A549 (cell line): ENCODE measurements at regions of chr6 and their contacts with region 1.

Region 1: DNA sequence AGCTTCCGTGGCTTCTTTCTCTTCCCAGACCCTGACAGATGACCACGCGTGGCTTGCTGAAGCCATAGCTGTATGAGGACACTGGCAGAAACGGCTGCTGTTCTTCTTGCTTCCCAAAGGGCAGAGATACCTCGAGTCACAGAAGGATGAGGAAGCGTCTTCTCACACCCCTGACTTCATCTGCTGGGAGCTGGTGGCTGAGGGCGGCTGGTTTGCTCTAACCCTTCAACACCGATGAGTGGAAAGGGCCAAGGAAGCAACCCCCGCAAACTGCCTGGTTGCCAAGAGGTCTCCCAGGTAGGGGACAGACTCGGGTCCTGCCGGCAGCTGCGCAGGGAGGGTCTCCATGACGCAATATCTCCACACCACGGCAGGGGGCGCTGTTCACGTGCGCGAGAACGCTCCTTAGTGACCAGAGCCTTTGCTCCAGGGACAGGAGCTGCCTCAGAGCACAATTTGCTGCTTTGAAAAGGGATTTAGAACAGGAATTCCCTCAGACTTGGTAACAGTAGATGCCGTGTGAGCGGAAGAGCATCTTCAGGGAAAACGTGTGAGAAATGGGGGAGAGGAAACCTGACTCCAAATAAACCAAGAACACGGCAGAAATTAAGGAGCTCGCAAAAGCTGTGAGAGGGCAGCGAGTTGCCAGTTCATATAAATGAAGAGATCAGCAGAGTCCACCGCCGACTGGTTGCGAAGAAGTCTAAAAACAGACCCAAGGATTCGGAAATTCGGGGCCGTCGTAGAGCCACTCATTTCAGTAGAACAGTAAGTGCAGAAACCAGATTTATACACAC is 80.2 kb downstream of the ERMARD start:
- DNase-seq: peak; percentile 46 to 51
- ATAC-seq: peak; percentile 81 to 97; a peak in 5 of 6 replicates
- H3K4me3 ChIP-seq: no peak overlapping the region
- H3K27ac ChIP-seq: no peak overlapping the region
- H3K4me1 ChIP-seq: peaks cover 12% of the 10 kb centered on the region; the same call in 2 of the 3 replicates
- CTCF ChIP-seq: peak; percentile 68
- EP300 ChIP-seq: no peak
- POLR2A ChIP-seq: no peak
- RAD21 ChIP-seq: peak; percentile 76 to 78

Region 2: GRCh38 chr6:169778646-169779045 is 53.0 kb before region 1 on chr6:
- CTCF ChIA-PET with region 1: no interaction called
- POLR2A ChIA-PET with region 1: no interaction called
- DNase-seq: no peak
- ATAC-seq: no peak
- H3K4me3 ChIP-seq: no peak overlapping the region
- H3K27ac ChIP-seq: no peak overlapping the region
- H3K4me1 ChIP-seq: no peaks in the 10 kb centered on the region
- CTCF ChIP-seq: no peak
- EP300 ChIP-seq: no peak
- POLR2A ChIP-seq: no peak
- RAD21 ChIP-seq: no peak

Region 3: DNA sequence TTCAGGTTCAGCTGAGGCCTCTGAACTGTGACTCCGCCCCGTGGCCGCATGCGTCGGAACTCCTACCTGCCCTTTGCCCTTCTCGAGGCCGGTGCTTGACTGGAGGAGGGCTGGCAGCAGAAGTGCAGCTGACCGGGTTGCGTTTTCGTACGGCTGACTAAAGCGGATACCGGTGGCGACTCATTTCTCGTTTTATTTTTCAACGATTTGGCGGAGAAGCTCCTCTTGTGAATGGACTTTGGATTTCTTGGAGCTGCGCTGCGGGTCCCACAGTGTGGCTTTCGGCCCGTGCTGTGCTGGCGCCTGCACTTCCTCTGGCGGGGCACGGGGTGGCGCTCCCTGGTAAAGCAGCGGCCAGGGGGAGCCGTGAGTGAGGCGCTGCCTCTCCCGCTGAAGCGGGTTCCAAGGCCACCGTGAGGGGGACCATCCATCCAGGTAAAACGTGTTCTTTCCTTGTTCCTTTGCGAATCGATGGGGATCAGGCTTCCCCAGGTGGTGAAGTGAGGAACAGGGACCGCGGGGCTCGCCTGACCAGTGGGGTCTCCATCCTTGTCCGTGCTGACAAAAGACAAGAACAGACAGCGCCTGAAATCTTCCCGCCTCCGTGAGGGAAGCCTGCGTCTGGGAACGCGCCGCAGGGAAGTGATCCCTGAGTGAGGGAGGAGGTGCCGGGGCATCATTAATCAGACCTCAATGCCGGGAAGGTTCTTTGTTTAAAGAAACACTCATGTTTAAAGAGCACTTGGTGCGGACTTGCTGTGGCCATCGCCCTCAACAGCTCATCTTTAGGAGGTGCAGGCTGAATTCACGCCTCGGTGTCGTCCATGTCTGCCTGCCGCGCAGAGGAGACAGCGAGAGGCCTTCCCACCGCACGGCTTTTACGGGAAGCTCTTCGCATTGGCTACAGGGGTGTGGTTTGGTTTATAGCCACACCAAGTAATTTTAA is 41.4 kb before region 1 on chr6:
- CTCF ChIA-PET with region 1: interaction called, 14 read pairs
- POLR2A ChIA-PET with region 1: no interaction called
- DNase-seq: peak; percentile 67 to 73
- ATAC-seq: peak; percentile 96 to 99
- H3K4me3 ChIP-seq: peak overlapping the region; percentile 50
- H3K27ac ChIP-seq: peak overlapping the region; percentile 71 to 84
- H3K4me1 ChIP-seq: 0 out of 3 replicates have a peak, but pooled peaks cover 5% of the 10 kb centered on the region
- CTCF ChIP-seq: peak; percentile 78
- EP300 ChIP-seq: no peak
- POLR2A ChIP-seq: 0 out of 2 replicates have a peak, but pooled peaks have one; percentile 10
- RAD21 ChIP-seq: peak; percentile 80 to 90

Region 4: GRCh38 chr6:169800668-169801395 is 30.8 kb before region 1 on chr6:
- CTCF ChIA-PET with region 1: interaction called, 17 read pairs
- POLR2A ChIA-PET with region 1: no interaction called
- DNase-seq: peak; percentile 52 to 72
- ATAC-seq: peak; percentile 94 to 95
- H3K4me3 ChIP-seq: no peak overlapping the region
- H3K27ac ChIP-seq: peak overlapping the region; percentile 80 to 89
- H3K4me1 ChIP-seq: peaks cover 32% of the 10 kb centered on the region
- CTCF ChIP-seq: no peak
- EP300 ChIP-seq: peak in 1 of 2 experiments; percentile 70; a peak in 1 of 5 replicates
- POLR2A ChIP-seq: no peak
- RAD21 ChIP-seq: no peak

Region 5: DNA sequence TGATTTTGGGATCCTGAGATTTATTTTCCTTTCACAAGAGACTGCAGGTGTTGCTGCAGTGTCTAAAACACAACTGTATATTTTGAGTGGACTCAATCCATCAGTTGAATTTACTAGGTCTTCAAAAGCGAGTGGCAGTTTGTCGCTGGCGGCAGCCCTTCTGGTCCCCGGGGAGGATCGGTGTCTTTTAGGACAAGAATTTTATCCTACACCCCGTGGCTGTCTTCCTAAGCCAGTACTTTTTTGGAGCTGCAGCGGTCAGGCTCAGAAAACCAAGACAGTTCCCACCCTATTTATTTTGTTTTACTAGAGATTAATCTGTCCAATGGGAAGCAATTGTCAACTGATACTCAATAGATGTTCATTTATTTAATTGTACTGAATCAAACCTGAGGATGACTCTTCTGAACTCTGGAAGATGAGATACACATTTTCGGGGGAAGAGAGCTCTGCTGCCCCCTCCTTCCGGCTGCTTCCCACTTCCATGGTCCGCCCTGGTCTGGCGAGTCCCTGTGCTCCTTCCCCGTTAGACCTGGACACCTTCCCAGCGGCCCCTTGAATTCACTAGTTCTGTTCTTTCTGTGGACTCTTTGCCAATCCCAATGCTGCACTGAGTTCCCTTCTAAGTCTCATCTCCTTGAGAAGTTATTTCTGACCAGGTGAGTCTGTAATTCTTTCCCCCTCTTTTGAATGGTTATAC is 10.4 kb after region 1 on chr6:
- CTCF ChIA-PET with region 1: interaction called, 30 read pairs
- POLR2A ChIA-PET with region 1: no interaction called
- DNase-seq: no peak
- ATAC-seq: no peak
- H3K4me3 ChIP-seq: no peak overlapping the region
- H3K27ac ChIP-seq: no peak overlapping the region
- H3K4me1 ChIP-seq: no peaks in the 10 kb centered on the region
- CTCF ChIP-seq: no peak
- EP300 ChIP-seq: no peak
- POLR2A ChIP-seq: no peak
- RAD21 ChIP-seq: no peak

Region 6: DNA sequence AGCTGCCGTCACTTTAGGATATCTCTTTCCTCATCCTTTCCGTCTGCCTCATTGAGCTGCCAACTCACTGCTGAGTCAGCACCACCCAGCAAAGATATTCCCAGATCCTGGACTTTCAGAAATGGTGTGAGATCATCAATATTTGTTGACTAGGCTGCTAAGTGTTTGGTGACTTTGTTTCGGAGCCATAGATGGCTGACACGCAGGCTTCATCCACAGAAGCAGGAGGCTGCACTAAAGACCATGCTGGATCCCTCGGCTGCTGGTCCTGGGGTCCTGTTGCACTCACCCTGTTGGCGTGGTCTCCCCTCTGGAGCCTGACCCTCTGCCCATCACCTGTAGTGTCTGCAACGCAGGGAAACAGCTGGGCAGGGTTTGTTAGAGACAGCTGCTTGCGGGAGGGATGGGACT is 16.3 kb after region 1 on chr6:
- CTCF ChIA-PET with region 1: interaction called, 30 read pairs
- POLR2A ChIA-PET with region 1: no interaction called
- DNase-seq: no peak
- ATAC-seq: no peak
- H3K4me3 ChIP-seq: no peak overlapping the region
- H3K27ac ChIP-seq: no peak overlapping the region
- H3K4me1 ChIP-seq: no peaks in the 10 kb centered on the region
- CTCF ChIP-seq: no peak
- EP300 ChIP-seq: no peak
- POLR2A ChIP-seq: no peak
- RAD21 ChIP-seq: no peak

Region 7: DNA sequence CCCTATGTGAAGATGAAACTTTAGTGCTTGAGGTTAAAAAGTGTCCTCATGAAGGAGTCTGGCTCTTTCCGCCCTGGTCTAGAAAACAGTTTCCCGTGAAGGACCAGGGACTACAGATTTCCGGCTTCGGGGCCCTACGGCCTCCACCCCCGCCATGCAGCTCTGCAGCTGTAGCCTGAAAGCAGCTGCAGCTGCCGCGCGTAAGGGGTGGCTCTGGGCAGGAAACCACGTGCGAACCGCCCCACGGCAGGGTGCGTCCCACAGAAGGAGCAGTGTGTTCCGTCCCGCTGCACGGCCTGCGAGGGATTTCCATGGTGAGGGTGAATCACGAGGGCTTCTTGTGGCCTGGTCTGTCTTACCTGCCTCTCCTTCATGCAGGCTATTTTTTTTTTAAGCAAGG is 36.8 kb after region 1 on chr6:
- CTCF ChIA-PET with region 1: no interaction called
- POLR2A ChIA-PET with region 1: no interaction called
- DNase-seq: no peak
- ATAC-seq: no peak
- H3K4me3 ChIP-seq: no peak overlapping the region
- H3K27ac ChIP-seq: no peak overlapping the region
- H3K4me1 ChIP-seq: no peaks in the 10 kb centered on the region
- CTCF ChIP-seq: no peak
- EP300 ChIP-seq: no peak
- POLR2A ChIP-seq: no peak
- RAD21 ChIP-seq: no peak

Region 8: GRCh38 chr6:170529839-170530469 is 698.3 kb after region 1 on chr6:
- CTCF ChIA-PET with region 1: interaction called, 39 read pairs
- POLR2A ChIA-PET with region 1: no interaction called
- DNase-seq: peak; percentile 57 to 67
- ATAC-seq: peak; percentile 81 to 95
- H3K4me3 ChIP-seq: no peak overlapping the region
- H3K27ac ChIP-seq: no peak overlapping the region
- H3K4me1 ChIP-seq: no peaks in the 10 kb centered on the region
- CTCF ChIP-seq: peak; percentile 72
- EP300 ChIP-seq: no peak
- POLR2A ChIP-seq: no peak
- RAD21 ChIP-seq: peak; percentile 78 to 81